Calu3 (cell line): ENCODE measurements at regions of chr2 and their contacts with region 1.

Region 1: GRCh38 chr2:101197215-101197745 is 46.1 kb upstream of the TBC1D8 start:
- DNase-seq: peak; percentile 15
- H3K4me3 Mint-ChIP-seq: no peak overlapping the region
- H3K27ac Mint-ChIP-seq: no peak overlapping the region
- H3K4me1 Mint-ChIP-seq: peaks cover 40% of the 10 kb centered on the region
- H3K27me3 Mint-ChIP-seq: no peaks in the 10 kb centered on the region
- CTCF ChIP-seq: peak; percentile 24

Region 2: GRCh38 chr2:101252408-101253012 is 55.2 kb after region 1 on chr2 and contains the start of gene CNOT11:
- CTCF ChIA-PET with region 1: interaction called, 9 read pairs
- intact Hi-C with region 1: loop called (anchors 1 kb)
- DNase-seq: peak; percentile 98
- H3K4me3 Mint-ChIP-seq: peak within 1 kb of the TSS; percentile 85
- H3K27ac Mint-ChIP-seq: peak within 1 kb of the TSS; percentile 86
- H3K4me1 Mint-ChIP-seq: peaks cover 42% of the 10 kb centered on the region
- H3K27me3 Mint-ChIP-seq: no peaks in the 10 kb centered on the region
- CTCF ChIP-seq: no peak
- total RNA-seq, gene CNOT11: 67.7 and 74.5 TPM in 2 replicates